Aorta (tissue), 5 donors: ENCODE measurements at regions of chr17 and their contacts with region 1.

Region 1: DNA sequence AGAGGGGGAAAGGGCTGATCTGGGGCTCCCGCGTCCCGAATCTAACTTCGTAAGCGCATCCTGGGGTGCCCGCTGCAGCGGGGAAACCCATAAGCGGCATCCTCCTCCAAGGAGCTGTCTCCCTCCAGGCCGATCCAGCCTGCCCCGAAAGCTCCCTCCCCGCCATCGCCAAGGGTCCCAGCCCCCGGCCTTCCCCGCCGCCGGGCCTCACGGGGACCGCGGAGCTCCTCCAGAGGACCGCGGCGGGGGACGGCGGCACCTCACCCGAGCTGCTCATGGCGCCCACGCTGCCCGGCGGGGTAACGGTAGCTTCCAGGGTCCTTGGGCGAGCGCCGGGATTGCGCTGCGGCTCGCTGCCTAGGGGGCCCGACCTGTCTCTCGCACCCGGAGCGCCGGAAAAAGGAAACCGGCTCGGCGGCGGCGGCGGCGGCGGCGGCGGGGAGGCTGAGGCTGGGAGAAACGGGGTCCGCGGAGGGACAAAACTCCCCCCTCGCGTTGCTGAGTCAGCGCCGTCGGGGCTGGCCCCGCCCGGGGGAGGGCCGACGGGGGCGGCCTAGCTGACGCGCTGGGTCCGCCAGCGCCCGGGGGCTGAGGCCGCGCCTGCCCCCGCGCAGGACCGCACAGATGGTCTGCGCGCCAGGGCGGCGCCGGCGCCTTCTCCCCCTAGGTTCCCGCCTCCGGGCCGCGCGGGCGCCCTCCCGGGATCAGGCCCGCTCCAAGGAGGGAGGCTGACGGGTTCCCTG is at the start of gene BLMH:
- DNase-seq: peak; percentile 89 to 96
- ATAC-seq: peak; percentile 97
- H3K4me3 ChIP-seq: peak within 1 kb of the TSS; percentile 81 to 82
- H3K27ac ChIP-seq: peak within 1 kb of the TSS in 1 of 2 donors; percentile 92
- H3K4me1 ChIP-seq: no peaks in the 10 kb centered on the region
- H3K27me3 ChIP-seq: no peaks in the 10 kb centered on the region
- total RNA-seq, gene BLMH: 28.5 to 37.8 TPM

Region 2: DNA sequence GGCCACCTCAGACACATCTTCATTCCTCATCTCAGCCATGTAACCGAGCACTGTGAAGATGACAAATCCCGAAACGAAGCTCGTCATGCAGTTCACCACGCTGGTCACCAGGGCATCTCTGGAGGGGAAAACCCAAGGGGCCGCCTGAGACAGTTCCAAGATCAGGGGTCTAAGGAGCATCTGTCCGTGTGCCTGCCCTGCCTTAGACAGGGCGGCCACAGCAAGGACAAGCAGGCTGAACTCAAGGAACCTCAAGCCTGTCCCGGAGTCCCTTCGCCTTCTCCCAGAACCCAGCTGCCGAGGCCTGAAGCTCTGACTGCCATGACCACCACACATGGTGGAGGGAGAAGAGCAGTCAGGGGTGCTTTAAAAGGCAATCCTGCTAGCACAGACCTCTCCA is 79.0 kb before region 1 on chr17:
- intact Hi-C with region 1: no loop called
- DNase-seq: no peak
- ATAC-seq: no peak
- H3K4me3 ChIP-seq: no peak overlapping the region
- H3K27ac ChIP-seq: no peak overlapping the region
- H3K4me1 ChIP-seq: no peaks in the 10 kb centered on the region
- H3K27me3 ChIP-seq: no peaks in the 10 kb centered on the region

Region 3: DNA sequence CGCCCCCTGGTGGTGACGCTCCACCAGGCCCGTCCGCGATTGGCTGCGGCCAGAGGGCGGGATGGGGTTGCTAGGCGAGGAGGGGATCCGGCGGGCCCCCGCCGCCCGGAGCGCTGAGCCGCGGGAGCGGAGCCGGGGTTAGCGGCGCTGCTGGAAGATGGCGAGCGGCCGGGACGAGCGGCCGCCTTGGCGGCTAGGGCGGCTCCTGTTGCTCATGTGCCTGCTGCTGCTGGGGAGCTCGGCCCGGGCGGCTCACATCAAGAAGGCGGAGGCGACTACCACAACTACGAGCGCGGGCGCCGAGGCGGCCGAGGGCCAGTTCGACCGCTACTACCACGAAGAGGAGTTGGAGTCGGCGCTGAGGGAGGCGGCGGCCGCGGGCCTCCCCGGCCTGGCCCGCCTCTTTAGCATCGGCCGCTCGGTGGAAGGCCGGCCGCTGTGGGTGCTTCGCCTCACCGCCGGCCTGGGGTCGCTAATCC is 87.1 kb after region 1 on chr17 and contains the start of gene CPD:
- intact Hi-C with region 1: loop called in 1 of 2 experiments (anchors 10 kb)
- DNase-seq: peak; percentile 97 to 99
- ATAC-seq: peak; percentile 99
- H3K4me3 ChIP-seq: peak within 1 kb of the TSS; percentile 77 to 98
- H3K27ac ChIP-seq: peak within 1 kb of the TSS in 1 of 2 donors; percentile 66
- H3K4me1 ChIP-seq: peaks cover 0 to 2% of the 10 kb centered on the region in 2 donors
- H3K27me3 ChIP-seq: no peaks in the 10 kb centered on the region
- total RNA-seq, gene CPD: 48.8 to 58.5 TPM

Region 4: GRCh38 chr17:30433514-30433913 is 141.8 kb after region 1 on chr17:
- intact Hi-C with region 1: loop called in 1 of 2 experiments (anchors 10 kb)
- DNase-seq: no peak
- ATAC-seq: no peak
- H3K4me3 ChIP-seq: no peak overlapping the region
- H3K27ac ChIP-seq: no peak overlapping the region
- H3K4me1 ChIP-seq: peaks cover 0 to 4% of the 10 kb centered on the region in 2 donors
- H3K27me3 ChIP-seq: no peaks in the 10 kb centered on the region